GM12878 (cell line): ENCODE measurements at regions of chr13 and their contacts with region 1.

Region 1: GRCh38 chr13:81406639-81407292 is 1065.8 kb upstream of the SPRY2 start:
- DNase-seq: peak; percentile 38
- ATAC-seq: peak; percentile 90
- H3K4me3 ChIP-seq: no peak overlapping the region
- H3K27ac ChIP-seq: no peak overlapping the region
- H3K4me1 ChIP-seq: no peaks in the 10 kb centered on the region
- H3K27me3 ChIP-seq: no peaks in the 10 kb centered on the region
- CTCF ChIP-seq: no peak
- EP300 ChIP-seq: no peak
- POLR2A ChIP-seq: no peak
- RAD21 ChIP-seq: no peak

Region 2: DNA sequence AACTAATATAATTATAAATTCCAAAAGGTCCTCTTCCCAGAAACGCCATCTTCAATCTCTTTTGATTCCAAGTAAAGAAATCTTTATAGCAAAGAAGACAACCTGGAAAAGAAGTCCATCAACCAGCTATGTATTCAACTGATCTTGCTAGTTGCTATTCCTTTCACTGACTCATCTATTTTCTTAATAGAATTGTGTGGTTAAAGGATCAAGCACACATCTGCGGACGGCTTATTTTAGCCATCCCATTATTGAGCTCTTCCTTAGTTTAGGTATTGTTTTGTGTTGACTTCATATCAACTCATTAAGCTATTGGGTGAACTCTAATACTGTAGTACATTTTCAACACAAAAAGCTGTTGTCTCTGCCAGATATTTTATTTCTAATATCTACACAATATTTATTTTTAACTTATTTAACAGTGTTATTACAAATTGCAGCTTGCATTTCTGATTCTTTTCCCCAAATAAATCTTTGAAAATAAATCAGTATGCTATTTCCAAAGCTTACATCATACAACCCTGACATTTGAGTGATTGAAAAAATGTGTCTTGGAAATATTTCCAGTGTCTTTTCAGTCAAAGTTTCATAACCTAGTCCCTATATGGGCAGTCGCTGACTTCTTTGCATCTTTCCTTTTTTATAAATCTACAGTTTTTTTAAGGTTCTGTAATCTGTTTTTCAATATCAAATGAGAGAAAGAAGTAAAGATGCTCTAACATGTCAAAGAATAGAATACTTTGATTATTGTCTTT is 907.1 kb before region 1 on chr13:
- CTCF ChIA-PET with region 1: no interaction called
- POLR2A ChIA-PET with region 1: no interaction called
- RAD21 ChIA-PET with region 1: no interaction called
- SMC1A ChIA-PET with region 1: no interaction called
- in situ Hi-C with region 1: no loop called
- intact Hi-C with region 1: no loop called
- DNase-seq: no peak
- ATAC-seq: no peak
- H3K4me3 ChIP-seq: no peak overlapping the region
- H3K27ac ChIP-seq: no peak overlapping the region
- H3K4me1 ChIP-seq: no peaks in the 10 kb centered on the region
- H3K27me3 ChIP-seq: no peaks in the 10 kb centered on the region
- CTCF ChIP-seq: no peak
- EP300 ChIP-seq: no peak
- POLR2A ChIP-seq: no peak
- RAD21 ChIP-seq: no peak

Region 3: GRCh38 chr13:81302125-81302524 is 104.6 kb before region 1 on chr13:
- CTCF ChIA-PET with region 1: no interaction called
- POLR2A ChIA-PET with region 1: no interaction called
- RAD21 ChIA-PET with region 1: no interaction called
- SMC1A ChIA-PET with region 1: no interaction called
- in situ Hi-C with region 1: no loop called
- intact Hi-C with region 1: no loop called
- DNase-seq: no peak
- ATAC-seq: no peak
- H3K4me3 ChIP-seq: no peak overlapping the region
- H3K27ac ChIP-seq: no peak overlapping the region
- H3K4me1 ChIP-seq: no peaks in the 10 kb centered on the region
- H3K27me3 ChIP-seq: no peaks in the 10 kb centered on the region
- CTCF ChIP-seq: no peak
- EP300 ChIP-seq: no peak
- POLR2A ChIP-seq: no peak
- RAD21 ChIP-seq: no peak

Region 4: GRCh38 chr13:81326913-81327312 is 79.9 kb before region 1 on chr13:
- CTCF ChIA-PET with region 1: no interaction called
- POLR2A ChIA-PET with region 1: no interaction called
- RAD21 ChIA-PET with region 1: no interaction called
- SMC1A ChIA-PET with region 1: no interaction called
- in situ Hi-C with region 1: no loop called
- intact Hi-C with region 1: no loop called
- DNase-seq: no peak
- ATAC-seq: no peak
- H3K4me3 ChIP-seq: no peak overlapping the region
- H3K27ac ChIP-seq: no peak overlapping the region
- H3K4me1 ChIP-seq: no peaks in the 10 kb centered on the region
- H3K27me3 ChIP-seq: no peaks in the 10 kb centered on the region
- CTCF ChIP-seq: no peak
- EP300 ChIP-seq: no peak
- POLR2A ChIP-seq: no peak
- RAD21 ChIP-seq: no peak

Region 5: GRCh38 chr13:81377921-81378320 is 28.8 kb before region 1 on chr13:
- CTCF ChIA-PET with region 1: no interaction called
- POLR2A ChIA-PET with region 1: interaction called, 3 read pairs
- RAD21 ChIA-PET with region 1: no interaction called
- SMC1A ChIA-PET with region 1: interaction called, 21 read pairs
- in situ Hi-C with region 1: no loop called
- intact Hi-C with region 1: no loop called
- DNase-seq: no peak
- ATAC-seq: no peak
- H3K4me3 ChIP-seq: no peak overlapping the region
- H3K27ac ChIP-seq: no peak overlapping the region
- H3K4me1 ChIP-seq: no peaks in the 10 kb centered on the region
- H3K27me3 ChIP-seq: no peaks in the 10 kb centered on the region
- CTCF ChIP-seq: no peak
- EP300 ChIP-seq: no peak
- POLR2A ChIP-seq: no peak
- RAD21 ChIP-seq: no peak

Region 6: GRCh38 chr13:81395368-81395767 is 11.4 kb before region 1 on chr13:
- CTCF ChIA-PET with region 1: no interaction called
- POLR2A ChIA-PET with region 1: no interaction called
- RAD21 ChIA-PET with region 1: interaction called, 10 read pairs
- SMC1A ChIA-PET with region 1: interaction called, 42 read pairs
- in situ Hi-C with region 1: no loop called
- intact Hi-C with region 1: no loop called
- DNase-seq: no peak
- ATAC-seq: peak; percentile 69
- H3K4me3 ChIP-seq: no peak overlapping the region
- H3K27ac ChIP-seq: no peak overlapping the region
- H3K4me1 ChIP-seq: no peaks in the 10 kb centered on the region
- H3K27me3 ChIP-seq: no peaks in the 10 kb centered on the region
- CTCF ChIP-seq: no peak
- EP300 ChIP-seq: no peak
- POLR2A ChIP-seq: no peak
- RAD21 ChIP-seq: no peak

Region 7: GRCh38 chr13:81582381-81582780 is 175.6 kb after region 1 on chr13:
- CTCF ChIA-PET with region 1: no interaction called
- POLR2A ChIA-PET with region 1: no interaction called
- RAD21 ChIA-PET with region 1: no interaction called
- SMC1A ChIA-PET with region 1: no interaction called
- in situ Hi-C with region 1: no loop called
- intact Hi-C with region 1: no loop called
- DNase-seq: no peak
- ATAC-seq: no peak
- H3K4me3 ChIP-seq: no peak overlapping the region
- H3K27ac ChIP-seq: no peak overlapping the region
- H3K4me1 ChIP-seq: no peaks in the 10 kb centered on the region
- H3K27me3 ChIP-seq: no peaks in the 10 kb centered on the region
- CTCF ChIP-seq: no peak
- EP300 ChIP-seq: no peak
- POLR2A ChIP-seq: no peak
- RAD21 ChIP-seq: no peak